Motor neuron (in vitro differentiated cells): ENCODE measurements at regions of chr6 and their contacts with region 1.

Region 1: GRCh38 chr6:36885461-36886401 is at the start of gene C6orf89:
- ATAC-seq: peak; percentile 97 to 99 (median 98)
- H3K4me3 ChIP-seq: peak within 1 kb of the TSS; percentile 40 to 62 (median 51)
- H3K27ac ChIP-seq: peak within 1 kb of the TSS; percentile 77 to 86
- H3K4me1 ChIP-seq: peaks cover 3 to 15% of the 10 kb centered on the region in 2 donors
- total RNA-seq, gene C6orf89: 22.2 to 55.6 (median 34.5) TPM

Region 2: DNA sequence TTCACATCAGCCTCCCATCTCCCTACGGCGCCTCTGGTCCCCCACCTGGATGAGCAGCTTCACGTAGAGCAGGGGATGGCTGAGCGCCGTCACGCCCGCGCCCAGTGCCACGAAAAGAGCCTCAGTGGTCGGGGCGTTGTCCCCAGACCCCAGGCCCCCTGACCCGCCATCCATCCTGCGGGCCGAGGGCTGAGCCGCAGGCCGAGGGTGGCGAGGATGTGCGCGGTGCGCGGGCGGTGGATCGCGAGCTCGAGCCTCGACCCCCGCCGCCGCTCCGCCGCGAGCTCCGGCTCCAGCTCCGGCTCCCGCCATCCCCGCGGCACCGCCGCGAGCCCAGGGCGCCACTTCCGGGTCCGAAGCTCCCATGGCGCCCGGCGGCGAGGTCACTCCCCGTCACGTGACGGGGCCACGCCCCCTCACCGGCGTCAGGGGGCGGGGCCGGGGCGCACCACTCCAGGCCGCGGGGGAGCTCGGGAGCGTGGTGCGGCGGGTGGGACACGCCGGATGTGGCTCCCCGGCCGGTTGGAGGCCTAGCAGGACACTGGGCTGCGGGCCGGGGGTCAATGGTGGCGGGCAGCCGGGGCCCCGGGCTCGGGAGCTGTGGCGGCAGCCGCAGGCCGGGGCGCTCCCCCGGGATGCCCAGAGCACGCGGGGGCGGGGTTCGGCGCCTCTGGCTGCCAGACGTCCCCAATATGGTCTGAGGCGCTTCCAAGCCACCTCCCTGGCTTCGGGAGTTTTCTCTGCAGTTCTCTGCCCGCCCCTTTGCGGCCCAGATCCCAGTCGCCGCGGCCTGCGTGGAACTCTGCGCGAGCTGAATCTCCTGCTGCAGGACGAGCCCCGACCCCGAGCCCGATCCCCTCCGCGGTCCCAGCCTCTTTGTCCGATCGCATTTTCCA is 100.3 kb after region 1 on chr6 and contains the start of gene MTCH1:
- in situ Hi-C with region 1: loop called in 1 of 9 experiments (anchors 25 kb)
- ATAC-seq: peak; percentile 81 to 92 (median 85)
- H3K4me3 ChIP-seq: peak within 1 kb of the TSS; percentile 85 to 96 (median 88)
- H3K27ac ChIP-seq: peak within 1 kb of the TSS; percentile 94 to 98
- H3K4me1 ChIP-seq: peaks cover 12% of the 10 kb centered on the region in 2 donors
- total RNA-seq, gene MTCH1: 84.8 to 271 (median 119) TPM

Region 3: DNA sequence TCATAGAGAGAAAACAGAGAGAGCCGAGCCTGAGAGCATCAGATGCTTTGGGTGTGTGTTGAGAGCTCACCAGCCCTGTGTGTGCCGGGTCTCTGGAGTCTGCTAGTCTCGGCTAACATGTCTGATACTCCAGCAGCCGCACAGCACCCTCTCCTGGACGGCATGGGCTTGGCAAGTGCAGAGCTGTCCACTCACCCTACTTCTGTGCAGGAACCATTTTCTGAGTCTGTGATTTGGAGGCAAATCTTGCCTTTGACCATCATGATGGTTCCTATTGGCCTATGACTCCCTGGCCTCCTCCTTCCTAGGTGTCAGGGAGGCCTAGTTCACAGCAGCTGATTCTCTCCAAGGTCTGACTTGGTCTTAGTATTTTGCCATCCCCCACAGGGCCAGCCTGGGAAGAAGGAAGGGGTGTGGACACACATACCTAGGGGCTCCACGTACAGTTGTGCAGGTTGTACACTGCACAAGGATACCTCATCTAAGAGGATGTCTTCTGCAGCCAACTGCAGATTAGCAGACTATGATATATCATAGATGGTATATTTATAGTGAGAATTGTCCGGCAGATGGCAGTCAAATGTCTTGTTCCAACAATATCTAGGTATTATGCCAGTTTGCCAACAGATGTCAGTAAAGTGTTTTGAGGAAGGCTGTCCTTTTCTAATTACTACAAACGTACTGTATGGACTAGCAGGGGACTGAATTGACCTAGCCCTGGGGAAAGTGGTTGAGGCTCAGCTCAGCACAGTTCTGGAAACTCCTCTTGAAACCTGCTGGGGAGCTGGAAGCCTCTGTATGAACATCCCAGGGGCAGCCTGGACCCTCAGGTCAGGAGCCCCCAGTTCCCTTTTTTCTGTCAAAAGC is 132.7 kb after region 1 on chr6:
- in situ Hi-C with region 1: loop called in 3 of 9 experiments (anchors 25 kb)
- ATAC-seq: peak; percentile 95 to 99 (median 96)
- H3K4me3 ChIP-seq: no peak overlapping the region
- H3K27ac ChIP-seq: peak overlapping the region; percentile 33 to 35
- H3K4me1 ChIP-seq: peaks cover 12 to 15% of the 10 kb centered on the region in 2 donors

Region 4: GRCh38 chr6:37169496-37170272 is 284.0 kb after region 1 on chr6 and contains the start of gene PIM1:
- in situ Hi-C with region 1: loop called in 1 of 9 experiments (anchors 25 kb)
- ATAC-seq: peak; percentile 45 to 84 (median 78)
- H3K4me3 ChIP-seq: peak within 1 kb of the TSS; percentile 56 to 93 (median 81)
- H3K27ac ChIP-seq: peak within 1 kb of the TSS; percentile 95
- H3K4me1 ChIP-seq: peaks cover 10 to 13% of the 10 kb centered on the region in 2 donors
- total RNA-seq, gene PIM1: 3.1 to 26.3 (median 17.9) TPM

Region 5: GRCh38 chr6:37222125-37222967 is 336.6 kb after region 1 on chr6:
- in situ Hi-C with region 1: loop called in 3 of 9 experiments (anchors 25 kb)
- ATAC-seq: peak; percentile 90 to 96 (median 92)
- H3K4me3 ChIP-seq: peak overlapping the region; percentile 19 to 44 (median 38)
- H3K27ac ChIP-seq: peak overlapping the region; percentile 27 to 50
- H3K4me1 ChIP-seq: peaks cover 8% of the 10 kb centered on the region in 2 donors